Kidney (tissue), 22 donors: ENCODE measurements at regions of chr6 and their contacts with region 1.

Region 1: GRCh38 chr6:32529697-32530429 is at the start of gene HLA-DRB5:
- DNase-seq: peak in 2 of 5 donors; percentile 12 to 49
- H3K4me3 ChIP-seq: peak within 1 kb of the TSS in 2 of 3 donors; percentile 10 to 47
- H3K27ac ChIP-seq: peak within 1 kb of the TSS; percentile 61 to 69
- H3K4me1 ChIP-seq: no peaks in the 10 kb centered on the region
- H3K27me3 ChIP-seq: no peaks in the 10 kb centered on the region
- CTCF ChIP-seq: no peak
- total RNA-seq, gene HLA-DRB5: 2.8 TPM

Region 2: DNA sequence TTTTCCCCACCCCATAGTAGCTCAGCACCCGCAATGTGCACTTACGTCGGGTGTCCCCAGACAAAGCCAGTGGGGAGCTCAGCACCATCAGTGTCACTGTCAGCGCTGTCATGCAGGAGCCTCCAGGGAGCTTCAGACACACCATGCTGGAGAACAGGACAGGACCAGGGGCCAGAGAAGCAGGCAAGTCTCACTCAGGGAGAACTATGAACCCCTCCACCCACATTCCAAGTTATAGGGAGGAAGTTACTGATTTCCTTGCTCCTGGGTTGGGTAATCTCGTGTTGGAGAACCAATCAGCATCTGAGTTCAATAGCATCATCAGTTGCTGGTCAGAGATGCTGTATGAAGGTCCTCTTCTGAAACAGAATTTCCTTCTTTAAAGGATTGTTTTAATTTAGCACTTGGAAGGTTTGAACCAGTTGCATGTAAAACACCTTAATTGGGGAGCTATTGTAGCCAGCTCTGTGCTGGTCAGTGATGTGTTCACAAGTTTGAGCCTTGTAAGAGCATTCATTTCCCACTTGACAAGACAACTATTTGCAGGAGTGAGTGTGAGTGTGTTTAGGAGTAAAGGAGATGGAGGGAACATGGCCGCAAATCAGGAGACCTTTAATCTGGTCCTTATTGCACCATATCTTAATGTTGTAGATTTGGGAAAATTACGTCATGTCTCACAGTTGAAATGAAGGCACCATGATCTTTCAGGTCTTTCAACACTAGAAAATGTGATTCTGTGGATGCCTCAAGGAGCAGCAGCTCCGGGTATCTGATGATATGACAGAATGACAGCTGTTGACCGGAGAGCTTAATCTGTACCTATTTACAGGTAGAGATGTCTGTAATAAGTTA is 60.0 kb after region 1 on chr6 and contains the start of gene HLA-DRB1:
- intact Hi-C with region 1: loop called (anchors 10 kb)
- DNase-seq: peak; percentile 10 to 87 (median 53)
- H3K4me3 ChIP-seq: peak within 1 kb of the TSS in 2 of 3 donors; percentile 6 to 67
- H3K27ac ChIP-seq: peak within 1 kb of the TSS; percentile 28 to 51
- H3K4me1 ChIP-seq: no peaks in the 10 kb centered on the region
- H3K27me3 ChIP-seq: no peaks in the 10 kb centered on the region
- CTCF ChIP-seq: no peak
- total RNA-seq, gene HLA-DRB1: 267 TPM